ENCODE measurements at regions of chr6 and their contacts with region 1.

Region 1: DNA sequence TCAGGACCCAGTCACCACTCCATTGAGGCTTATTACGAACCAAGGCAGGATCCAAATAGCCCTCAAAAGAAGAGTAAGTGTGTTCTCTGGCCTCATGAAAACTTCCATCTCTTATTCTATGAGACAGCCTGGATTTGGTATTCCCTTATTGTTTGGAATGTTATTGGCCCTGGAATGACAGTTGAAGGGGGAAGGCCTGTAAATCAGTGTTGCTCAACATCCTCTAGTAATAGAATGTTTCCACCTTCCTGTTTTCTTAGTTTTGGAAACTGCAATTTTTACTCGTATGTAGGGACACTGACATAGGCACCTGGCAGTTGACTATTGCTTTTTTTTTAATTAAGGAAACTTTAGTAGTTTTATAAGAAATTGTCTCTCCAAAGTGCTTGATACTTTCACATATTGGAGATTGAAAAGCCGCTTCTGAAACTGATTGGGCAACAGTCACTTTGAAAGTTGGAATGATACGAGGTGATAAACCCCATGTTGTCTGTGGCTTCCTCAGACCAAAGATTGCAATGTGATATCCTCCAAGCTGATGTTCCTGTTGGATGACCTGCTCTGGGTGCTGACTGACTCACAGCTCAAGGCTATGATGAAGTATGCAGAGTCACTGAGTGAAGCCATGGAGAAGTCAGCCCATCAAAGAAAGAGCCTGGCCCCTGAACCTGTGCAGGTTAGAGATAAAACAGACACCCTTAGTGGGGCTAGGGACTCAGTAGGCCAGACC is 43.1 kb downstream of the BLTP3A start:
- DNase-seq: no peak
- ATAC-seq: no peak
- H3K4me3 ChIP-seq: no peak overlapping the region
- H3K27ac ChIP-seq: peak overlapping the region in 1 of 10 donors; percentile 29
- H3K4me1 ChIP-seq: peaks cover 0 to 20% (median 0%) of the 10 kb centered on the region in 9 donors
- H3K27me3 ChIP-seq: no peaks in the 10 kb centered on the region
- CTCF ChIP-seq: no peak

Region 2: GRCh38 chr6:34696739-34697543 is 138.0 kb before region 1 on chr6 and contains the start of gene ILRUN:
- intact Hi-C with region 1: no loop called
- DNase-seq: peak; percentile 96 to 98
- ATAC-seq: peak; percentile 94 to 98 (median 96)
- H3K4me3 ChIP-seq: peak within 1 kb of the TSS; percentile 89 to 100 (median 96)
- H3K27ac ChIP-seq: peak within 1 kb of the TSS; percentile 91 to 99 (median 97)
- H3K4me1 ChIP-seq: peaks cover 5 to 44% (median 30%) of the 10 kb centered on the region in 9 donors
- H3K27me3 ChIP-seq: no peaks in the 10 kb centered on the region
- CTCF ChIP-seq: no peak
- total RNA-seq, gene ILRUN: 86.9 to 157 (median 114) TPM

Region 3: DNA sequence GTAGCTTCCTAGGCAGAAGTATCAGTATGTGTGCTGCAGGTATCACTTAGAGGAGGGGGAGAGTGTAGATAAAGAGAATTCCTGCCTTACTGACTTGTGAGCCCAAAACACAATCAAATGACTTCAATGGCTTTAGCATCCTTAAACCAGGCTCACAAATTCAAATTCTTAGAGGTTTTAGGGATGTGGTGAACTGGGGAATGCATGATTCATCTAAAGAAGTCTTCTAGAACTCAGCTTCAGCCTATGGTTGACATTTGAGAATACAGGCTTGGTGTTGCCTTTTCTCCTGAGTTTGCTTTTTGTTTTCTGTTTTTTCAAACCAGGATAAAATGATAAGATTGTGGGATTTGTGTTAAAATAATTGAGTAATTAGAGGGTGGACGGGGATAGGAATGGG is 63.2 kb before region 1 on chr6:
- intact Hi-C with region 1: no loop called
- DNase-seq: no peak
- ATAC-seq: no peak
- H3K4me3 ChIP-seq: no peak overlapping the region
- H3K27ac ChIP-seq: no peak overlapping the region
- H3K4me1 ChIP-seq: peaks cover 0 to 42% (median 11%) of the 10 kb centered on the region in 9 donors
- H3K27me3 ChIP-seq: no peaks in the 10 kb centered on the region
- CTCF ChIP-seq: no peak

Region 4: GRCh38 chr6:34859951-34860350 is 25.0 kb after region 1 on chr6:
- intact Hi-C with region 1: loop called in 1 of 10 experiments (anchors 2 kb)
- DNase-seq: no peak
- ATAC-seq: no peak
- H3K4me3 ChIP-seq: no peak overlapping the region
- H3K27ac ChIP-seq: no peak overlapping the region
- H3K4me1 ChIP-seq: peaks cover 0 to 21% (median 10%) of the 10 kb centered on the region in 9 donors
- H3K27me3 ChIP-seq: no peaks in the 10 kb centered on the region
- CTCF ChIP-seq: no peak

Measured in heart right ventricle (tissue), 16 donors.